ENCODE measurements at regions of chr1 and their contacts with region 1.

Region 1: GRCh38 chr1:119662034-119662437 is 14.0 kb upstream of the ZNF697 start:
- DNase-seq: no peak
- H3K4me3 ChIP-seq: no peak overlapping the region
- H3K27me3 ChIP-seq: no peaks in the 10 kb centered on the region
- CTCF ChIP-seq: no peak

Region 2: GRCh38 chr1:119608816-119609454 is 53.1 kb before region 1 on chr1:
- CTCF ChIA-PET with region 1: interaction called, 120 read pairs
- POLR2A ChIA-PET with region 1: no interaction called
- DNase-seq: no peak
- H3K4me3 ChIP-seq: no peak overlapping the region
- H3K27me3 ChIP-seq: no peaks in the 10 kb centered on the region
- CTCF ChIP-seq: no peak

Region 3: DNA sequence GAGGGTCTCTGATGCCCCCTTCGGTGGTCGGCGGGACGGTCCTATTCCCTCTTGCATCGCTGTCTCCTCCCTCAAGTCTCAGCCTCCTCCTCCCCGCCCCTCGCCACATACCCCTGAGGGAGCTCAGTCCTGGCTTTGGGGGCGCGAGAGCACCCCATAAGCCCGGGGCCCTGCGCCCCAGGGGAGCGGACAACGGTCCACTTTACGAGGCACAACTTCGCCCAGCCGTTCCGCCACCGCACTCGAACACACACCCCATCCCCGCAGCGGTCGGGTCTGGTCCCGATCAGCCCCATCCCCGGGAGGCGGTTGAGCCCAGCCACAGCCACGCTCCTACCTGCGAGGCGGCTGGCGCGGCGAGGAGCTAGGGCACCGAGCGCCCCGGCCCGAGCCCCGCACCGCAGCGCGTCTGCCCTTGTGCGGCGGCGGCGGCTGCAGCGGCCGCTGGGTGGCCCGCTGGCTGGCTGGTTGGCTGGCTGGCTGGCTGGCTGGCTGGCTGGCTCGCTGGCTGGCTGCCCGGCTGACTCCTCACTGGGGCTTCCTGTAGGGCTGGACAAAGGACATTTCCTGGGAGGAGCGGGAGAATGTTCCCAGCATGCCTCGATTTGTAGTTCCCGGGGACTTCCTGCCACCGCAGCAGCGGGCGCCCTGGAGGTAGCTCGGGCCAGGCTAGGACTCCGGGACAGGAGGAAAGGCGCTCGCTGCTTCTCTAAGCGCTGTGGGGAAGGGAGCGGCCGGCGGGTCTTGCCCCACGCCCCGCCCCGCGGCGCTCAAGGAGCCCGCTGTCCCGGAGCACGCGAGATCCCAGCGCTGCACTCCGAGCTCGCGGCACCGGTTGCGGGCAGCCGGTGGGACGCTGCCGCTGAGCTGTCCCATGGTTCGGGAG is 14.1 kb before region 1 on chr1 and contains the start of gene ZNF697:
- CTCF ChIA-PET with region 1: interaction called, 41 read pairs
- POLR2A ChIA-PET with region 1: no interaction called
- DNase-seq: peak; percentile 90
- H3K4me3 ChIP-seq: peak within 1 kb of the TSS; percentile 85
- H3K27me3 ChIP-seq: no peaks in the 10 kb centered on the region
- CTCF ChIP-seq: peak; percentile 51; the same call in 1 of the 2 replicates
- polyA plus RNA-seq, gene ZNF697: 3.2 and 5.7 TPM in 2 replicates

Region 4: DNA sequence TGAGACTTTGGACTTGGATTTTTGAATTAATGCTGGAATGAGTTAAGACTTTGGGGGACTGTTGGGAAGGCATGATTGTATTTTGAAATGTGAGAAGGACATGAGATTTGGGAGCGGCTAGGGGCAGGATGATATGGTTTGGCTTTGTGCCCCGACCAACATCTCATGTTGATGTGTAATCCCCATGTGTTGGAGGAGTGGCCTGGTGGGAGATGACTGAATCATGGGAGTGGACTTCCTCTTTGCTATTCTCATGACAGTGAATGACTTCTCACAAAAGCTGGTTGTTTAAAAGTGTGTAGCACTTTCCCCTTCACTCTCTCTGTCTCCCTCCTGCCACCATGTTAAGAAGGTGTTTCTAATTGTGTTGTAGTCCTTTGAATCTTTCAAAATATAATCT is 40.3 kb after region 1 on chr1:
- CTCF ChIA-PET with region 1: no interaction called
- POLR2A ChIA-PET with region 1: no interaction called
- DNase-seq: peak; percentile 42
- H3K4me3 ChIP-seq: no peak overlapping the region
- H3K27me3 ChIP-seq: peaks cover 1% of the 10 kb centered on the region; the same call in 1 of the 2 replicates
- CTCF ChIP-seq: no peak